ENCODE measurements at regions of chr10 and their contacts with region 1.

Region 1: GRCh38 chr10:114829160-114829909 is 7.8 kb downstream of the FHIP2A start:
- DNase-seq: no peak
- H3K4me3 ChIP-seq: no peak overlapping the region
- H3K27ac ChIP-seq: no peak overlapping the region
- H3K4me1 ChIP-seq: peaks cover 31% of the 10 kb centered on the region
- H3K27me3 ChIP-seq: no peaks in the 10 kb centered on the region
- CTCF ChIP-seq: no peak

Region 2: DNA sequence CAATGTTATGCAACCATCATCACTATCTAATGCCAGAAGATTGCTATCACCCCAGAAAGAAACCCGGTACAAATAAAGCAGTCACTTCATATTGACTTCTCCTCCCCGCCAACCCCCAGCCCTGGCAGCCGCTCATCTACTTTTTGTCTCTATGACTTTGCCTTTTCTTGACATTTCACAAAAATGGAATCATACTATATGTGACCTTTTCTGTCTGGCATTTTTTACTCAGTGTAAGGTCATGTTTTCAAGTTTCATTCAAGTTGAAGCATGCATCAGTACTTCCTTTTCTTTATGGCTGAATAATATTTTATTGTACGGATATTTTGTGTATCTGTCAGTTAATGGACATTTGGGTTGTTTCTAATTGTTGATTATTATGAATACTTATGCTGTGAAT is 20.3 kb after region 1 on chr10:
- CTCF ChIA-PET with region 1: no interaction called
- dilution Hi-C with region 1: no loop called
- in situ Hi-C with region 1: no loop called
- intact Hi-C with region 1: loop called (anchors 2 kb)
- DNase-seq: no peak
- H3K4me3 ChIP-seq: no peak overlapping the region
- H3K27ac ChIP-seq: no peak overlapping the region
- H3K4me1 ChIP-seq: no peaks in the 10 kb centered on the region
- H3K27me3 ChIP-seq: no peaks in the 10 kb centered on the region
- CTCF ChIP-seq: no peak